ENCODE measurements at regions of chr3 and their contacts with region 1.

Region 1: GRCh38 chr3:30628901-30629590 is 22.6 kb downstream of the TGFBR2 start:
- DNase-seq: peak in 2 of 9 experiments; percentile 57 to 76
- ATAC-seq: peak; percentile 9
- H3K4me3 ChIP-seq: peak overlapping the region in 1 of 2 experiments; percentile 19
- H3K4me3 Mint-ChIP-seq: peak overlapping the region; percentile 52
- H3K27ac ChIP-seq: peak overlapping the region; percentile 43 to 78
- H3K27ac Mint-ChIP-seq: peak overlapping the region; percentile 94
- H3K4me1 ChIP-seq: peaks cover 97% of the 10 kb centered on the region
- H3K4me1 Mint-ChIP-seq: peaks cover 92% of the 10 kb centered on the region
- H3K27me3 ChIP-seq: no peaks in the 10 kb centered on the region
- H3K27me3 Mint-ChIP-seq: no peaks in the 10 kb centered on the region
- CTCF ChIP-seq: peak; percentile 9

Region 2: GRCh38 chr3:30353711-30354467 is 275.2 kb before region 1 on chr3:
- CTCF ChIA-PET with region 1: no interaction called
- POLR2A ChIA-PET with region 1: no interaction called
- intact Hi-C with region 1: loop called in 1 of 2 experiments (anchors 5 kb)
- DNase-seq: peak; percentile 3 to 91 (median 53)
- ATAC-seq: peak; percentile 98
- H3K4me3 ChIP-seq: peak overlapping the region in 1 of 2 experiments; percentile 2
- H3K4me3 Mint-ChIP-seq: peak overlapping the region; percentile 64
- H3K27ac ChIP-seq: peak overlapping the region in 1 of 2 experiments; percentile 25
- H3K27ac Mint-ChIP-seq: peak overlapping the region; percentile 94
- H3K4me1 ChIP-seq: peaks cover 82% of the 10 kb centered on the region
- H3K4me1 Mint-ChIP-seq: peaks cover 85% of the 10 kb centered on the region
- H3K27me3 ChIP-seq: no peaks in the 10 kb centered on the region
- H3K27me3 Mint-ChIP-seq: no peaks in the 10 kb centered on the region
- CTCF ChIP-seq: no peak

Region 3: DNA sequence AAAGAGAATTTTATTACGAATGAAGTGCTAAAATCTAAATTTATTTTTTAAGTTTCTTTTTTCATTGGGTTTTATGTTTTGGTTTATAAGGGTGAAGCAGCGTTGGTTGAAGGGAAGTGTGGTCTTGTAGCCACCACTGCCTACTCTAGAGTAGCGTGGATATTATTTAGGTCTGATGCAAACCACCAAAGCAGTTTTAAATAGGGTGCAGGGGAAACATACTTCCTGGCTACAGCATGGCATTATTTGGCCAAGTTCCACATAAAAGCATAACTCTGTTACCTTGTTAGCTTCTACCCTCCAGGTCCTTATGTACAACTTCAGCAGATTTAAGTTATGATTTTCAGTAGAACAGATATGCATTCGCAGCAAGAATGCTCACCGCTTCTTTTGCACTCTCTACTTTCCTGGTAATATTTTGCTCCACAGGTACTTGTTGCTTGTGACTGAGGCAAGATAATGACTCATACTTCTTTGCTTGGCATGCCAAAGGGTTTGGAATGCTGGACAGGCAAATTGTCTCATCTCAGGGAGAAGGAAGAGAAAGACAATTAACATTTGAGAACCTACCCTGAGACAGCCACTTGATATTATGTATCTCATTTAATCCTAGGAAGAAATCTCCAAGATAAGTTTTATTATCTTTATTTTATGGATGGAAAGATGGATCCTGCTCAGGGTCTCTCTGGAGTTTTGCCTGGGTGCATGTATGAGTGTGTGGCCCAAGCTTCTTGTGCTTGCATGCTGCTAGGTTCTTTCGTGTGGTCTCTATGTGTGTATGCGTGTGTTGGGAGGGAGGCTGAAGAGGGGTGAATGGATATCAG is 17.2 kb before region 1 on chr3:
- CTCF ChIA-PET with region 1: interaction called, 13 read pairs
- POLR2A ChIA-PET with region 1: interaction called, 13 read pairs
- intact Hi-C with region 1: loop called (anchors 2 kb)
- DNase-seq: peak in 2 of 9 experiments; percentile 53 to 69
- ATAC-seq: peak; percentile 29
- H3K4me3 ChIP-seq: peak overlapping the region; percentile 89 to 94
- H3K4me3 Mint-ChIP-seq: peak overlapping the region; percentile 94
- H3K27ac ChIP-seq: peak overlapping the region; percentile 63 to 74
- H3K27ac Mint-ChIP-seq: peak overlapping the region; percentile 98
- H3K4me1 ChIP-seq: peaks cover 54% of the 10 kb centered on the region
- H3K4me1 Mint-ChIP-seq: peaks cover 68% of the 10 kb centered on the region
- H3K27me3 ChIP-seq: no peaks in the 10 kb centered on the region
- H3K27me3 Mint-ChIP-seq: no peaks in the 10 kb centered on the region
- CTCF ChIP-seq: no peak

Region 4: GRCh38 chr3:30644593-30645012 is 15.6 kb after region 1 on chr3:
- CTCF ChIA-PET with region 1: interaction called, 10 read pairs
- POLR2A ChIA-PET with region 1: interaction called, 11 read pairs
- intact Hi-C with region 1: loop called in 1 of 2 experiments (anchors 1 kb)
- DNase-seq: peak in 8 of 9 experiments; percentile 26 to 86 (median 62)
- ATAC-seq: peak; percentile 67
- H3K4me3 ChIP-seq: peak overlapping the region in 1 of 2 experiments; percentile 13
- H3K4me3 Mint-ChIP-seq: peak overlapping the region; percentile 59
- H3K27ac ChIP-seq: peak overlapping the region; percentile 50 to 77
- H3K27ac Mint-ChIP-seq: peak overlapping the region; percentile 92
- H3K4me1 ChIP-seq: peaks cover 100% of the 10 kb centered on the region
- H3K4me1 Mint-ChIP-seq: peaks cover 94% of the 10 kb centered on the region
- H3K27me3 ChIP-seq: no peaks in the 10 kb centered on the region
- H3K27me3 Mint-ChIP-seq: no peaks in the 10 kb centered on the region
- CTCF ChIP-seq: no peak

Region 5: GRCh38 chr3:30667280-30667651 is 38.2 kb after region 1 on chr3:
- CTCF ChIA-PET with region 1: interaction called, 8 read pairs
- POLR2A ChIA-PET with region 1: interaction called, 7 read pairs
- intact Hi-C with region 1: loop called in 1 of 2 experiments (anchors 5 kb)
- DNase-seq: peak in 2 of 9 experiments; percentile 48 to 76
- ATAC-seq: peak; percentile 39
- H3K4me3 ChIP-seq: no peak overlapping the region
- H3K4me3 Mint-ChIP-seq: peak overlapping the region; percentile 45
- H3K27ac ChIP-seq: peak overlapping the region in 1 of 2 experiments; percentile 61
- H3K27ac Mint-ChIP-seq: peak overlapping the region; percentile 91
- H3K4me1 ChIP-seq: peaks cover 98% of the 10 kb centered on the region
- H3K4me1 Mint-ChIP-seq: peaks cover 96% of the 10 kb centered on the region
- H3K27me3 ChIP-seq: no peaks in the 10 kb centered on the region
- H3K27me3 Mint-ChIP-seq: no peaks in the 10 kb centered on the region
- CTCF ChIP-seq: no peak

Measured in CD8-positive, alpha-beta T cell (primary cell).